Caco-2 (cell line): ENCODE measurements at regions of chr11 and their contacts with region 1.

Region 1: GRCh38 chr11:119095066-119095880 is 6.4 kb downstream of the DPAGT1 start:
- DNase-seq: peak; percentile 100
- H3K4me3 ChIP-seq: peak overlapping the region; percentile 95
- H3K4me3 Mint-ChIP-seq: peak overlapping the region; percentile 92
- H3K27ac Mint-ChIP-seq: peak overlapping the region; percentile 98
- H3K4me1 ChIP-seq: peaks cover 18% of the 10 kb centered on the region
- H3K4me1 Mint-ChIP-seq: peaks cover 19% of the 10 kb centered on the region
- H3K27me3 ChIP-seq: no peaks in the 10 kb centered on the region
- H3K27me3 Mint-ChIP-seq: no peaks in the 10 kb centered on the region
- CTCF ChIP-seq: peak; percentile 14 to 32

Region 2: DNA sequence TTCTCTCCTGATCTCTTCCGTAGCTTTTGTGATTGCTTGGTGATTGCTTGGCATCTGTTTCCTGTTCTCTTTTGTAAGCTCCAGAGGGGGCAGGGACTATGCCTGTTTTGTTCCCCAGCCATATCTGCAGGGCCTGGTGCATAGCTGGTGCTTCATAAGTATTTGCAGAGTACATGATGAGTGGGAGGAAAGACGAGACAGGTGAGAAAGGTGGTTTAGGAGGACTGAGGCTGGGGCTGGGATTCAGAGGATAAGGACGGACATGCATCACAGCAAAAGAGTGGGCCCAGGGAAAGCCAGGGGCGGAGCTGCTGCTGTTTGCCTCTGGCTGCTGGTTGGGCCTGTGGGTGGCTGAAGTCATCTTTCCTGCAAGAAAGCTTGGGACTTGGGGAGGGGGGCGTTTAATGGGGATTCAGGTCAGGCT is 1360.7 kb before region 1 on chr11:
- CTCF ChIA-PET with region 1: no interaction called
- POLR2A ChIA-PET with region 1: no interaction called
- intact Hi-C with region 1: no loop called
- DNase-seq: no peak
- H3K4me3 ChIP-seq: no peak overlapping the region
- H3K4me3 Mint-ChIP-seq: no peak overlapping the region
- H3K27ac Mint-ChIP-seq: no peak overlapping the region
- H3K4me1 ChIP-seq: no peaks in the 10 kb centered on the region
- H3K4me1 Mint-ChIP-seq: peaks cover 4% of the 10 kb centered on the region
- H3K27me3 ChIP-seq: no peaks in the 10 kb centered on the region
- H3K27me3 Mint-ChIP-seq: no peaks in the 10 kb centered on the region
- CTCF ChIP-seq: no peak

Region 3: GRCh38 chr11:119018074-119018938 is 77.0 kb before region 1 on chr11 and contains the starts of genes RPS25 and TRAPPC4:
- CTCF ChIA-PET with region 1: no interaction called
- POLR2A ChIA-PET with region 1: no interaction called
- intact Hi-C with region 1: loop called (anchors 2 kb)
- DNase-seq: peak; percentile 98 to 99
- H3K4me3 ChIP-seq: peak within 1 kb of the TSS; percentile 91
- H3K4me3 Mint-ChIP-seq: peak within 1 kb of the TSS; percentile 96
- H3K27ac Mint-ChIP-seq: peak within 1 kb of the TSS; percentile 98
- H3K4me1 ChIP-seq: peaks cover 46% of the 10 kb centered on the region
- H3K4me1 Mint-ChIP-seq: peaks cover 25% of the 10 kb centered on the region
- H3K27me3 ChIP-seq: no peaks in the 10 kb centered on the region
- H3K27me3 Mint-ChIP-seq: no peaks in the 10 kb centered on the region
- CTCF ChIP-seq: no peak
- total RNA-seq, gene RPS25: 1,811 and 1,967 TPM in 2 replicates
- total RNA-seq, gene TRAPPC4: 118 and 126 TPM in 2 replicates

Region 4: GRCh38 chr11:119067371-119068222 is 27.7 kb before region 1 on chr11 and contains the start of gene VPS11:
- CTCF ChIA-PET with region 1: interaction called, 6 read pairs
- POLR2A ChIA-PET with region 1: interaction called, 16 read pairs
- intact Hi-C with region 1: loop called (anchors 1 kb)
- DNase-seq: peak; percentile 99
- H3K4me3 ChIP-seq: peak within 1 kb of the TSS; percentile 80
- H3K4me3 Mint-ChIP-seq: peak within 1 kb of the TSS; percentile 100
- H3K27ac Mint-ChIP-seq: peak within 1 kb of the TSS; percentile 95
- H3K4me1 ChIP-seq: no peaks in the 10 kb centered on the region
- H3K4me1 Mint-ChIP-seq: peaks cover 12% of the 10 kb centered on the region
- H3K27me3 ChIP-seq: no peaks in the 10 kb centered on the region
- H3K27me3 Mint-ChIP-seq: no peaks in the 10 kb centered on the region
- CTCF ChIP-seq: no peak
- total RNA-seq, gene VPS11: 43.2 and 47.7 TPM in 2 replicates

Region 5: DNA sequence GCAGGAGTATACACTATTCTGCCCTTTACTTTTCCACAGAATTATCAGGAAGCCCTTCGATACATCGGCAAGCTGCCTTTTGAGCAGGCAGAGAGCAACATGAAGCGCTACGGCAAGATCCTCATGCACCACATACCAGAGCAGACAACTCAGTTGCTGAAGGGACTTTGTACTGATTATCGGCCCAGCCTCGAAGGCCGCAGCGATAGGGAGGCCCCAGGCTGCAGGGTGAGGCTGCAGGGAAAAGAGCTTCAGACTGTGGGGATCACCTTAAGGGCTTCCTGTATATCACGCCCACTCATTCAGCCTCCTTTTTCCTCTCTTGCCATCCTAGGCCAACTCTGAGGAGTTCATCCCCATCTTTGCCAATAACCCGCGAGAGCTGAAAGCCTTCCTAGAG is 17.4 kb before region 1 on chr11:
- CTCF ChIA-PET with region 1: no interaction called
- POLR2A ChIA-PET with region 1: no interaction called
- intact Hi-C with region 1: no loop called
- DNase-seq: no peak
- H3K4me3 ChIP-seq: no peak overlapping the region
- H3K4me3 Mint-ChIP-seq: no peak overlapping the region
- H3K27ac Mint-ChIP-seq: no peak overlapping the region
- H3K4me1 ChIP-seq: no peaks in the 10 kb centered on the region
- H3K4me1 Mint-ChIP-seq: no peaks in the 10 kb centered on the region
- H3K27me3 ChIP-seq: no peaks in the 10 kb centered on the region
- H3K27me3 Mint-ChIP-seq: no peaks in the 10 kb centered on the region
- CTCF ChIP-seq: no peak

Region 6: GRCh38 chr11:119121008-119121810 is 25.9 kb after region 1 on chr11 and contains the start of gene HINFP:
- CTCF ChIA-PET with region 1: interaction called, 8 read pairs
- POLR2A ChIA-PET with region 1: interaction called, 21 read pairs
- intact Hi-C with region 1: loop called (anchors 1 kb)
- DNase-seq: peak; percentile 100
- H3K4me3 ChIP-seq: peak within 1 kb of the TSS; percentile 84
- H3K4me3 Mint-ChIP-seq: peak within 1 kb of the TSS; percentile 88
- H3K27ac Mint-ChIP-seq: peak within 1 kb of the TSS; percentile 90
- H3K4me1 ChIP-seq: peaks cover 18% of the 10 kb centered on the region
- H3K4me1 Mint-ChIP-seq: peaks cover 18% of the 10 kb centered on the region
- H3K27me3 ChIP-seq: no peaks in the 10 kb centered on the region
- H3K27me3 Mint-ChIP-seq: no peaks in the 10 kb centered on the region
- CTCF ChIP-seq: no peak
- total RNA-seq, gene HINFP: 61.6 and 65.2 TPM in 2 replicates